ENCODE measurements at regions of chr3 and their contacts with region 1.

Region 1: DNA sequence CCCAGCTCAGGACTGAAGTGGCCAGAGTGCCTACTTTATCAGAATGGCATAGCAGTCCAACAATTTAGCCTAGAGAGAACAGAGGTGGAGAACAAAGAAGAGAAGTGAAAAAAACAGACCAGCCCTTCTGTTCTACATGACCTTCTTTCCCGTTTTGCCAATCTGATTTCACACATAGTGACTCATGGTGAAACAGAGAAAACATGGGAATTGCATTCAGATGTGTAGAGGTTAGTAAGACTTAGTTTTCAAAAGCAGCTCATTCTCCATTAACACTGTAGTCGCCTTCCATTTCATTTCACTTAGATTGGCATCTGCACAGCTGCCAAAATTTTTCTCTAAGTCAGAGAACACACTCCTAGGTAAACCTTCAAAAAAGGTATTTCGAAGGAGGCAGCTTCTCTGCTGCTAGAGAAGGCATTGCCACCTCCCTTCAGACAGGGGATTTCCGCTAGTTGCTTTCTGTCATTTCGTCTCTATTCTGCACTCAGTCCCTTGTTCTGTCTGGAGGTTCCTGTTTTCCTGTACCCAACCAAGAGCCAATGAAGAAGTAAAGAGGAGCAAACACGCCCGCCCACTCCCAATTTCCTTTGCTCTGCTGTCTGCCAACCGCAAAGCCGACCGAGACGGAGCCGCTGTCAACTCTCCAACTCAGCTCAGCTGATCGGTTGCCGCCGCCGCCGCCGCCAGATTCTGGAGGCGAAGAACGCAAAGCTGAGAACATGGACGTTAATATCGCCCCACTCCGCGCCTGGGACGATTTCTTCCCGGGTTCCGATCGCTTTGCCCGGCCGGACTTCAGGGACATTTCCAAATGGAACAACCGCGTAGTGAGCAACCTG is at the start of gene ARL6IP5:
- DNase-seq: peak; percentile 97
- ATAC-seq: peak; percentile 48
- H3K4me3 Mint-ChIP-seq: peak within 1 kb of the TSS; percentile 90
- H3K27ac Mint-ChIP-seq: peak within 1 kb of the TSS; percentile 97
- H3K4me1 Mint-ChIP-seq: peaks cover 59% of the 10 kb centered on the region
- H3K27me3 Mint-ChIP-seq: no peaks in the 10 kb centered on the region
- total RNA-seq, gene ARL6IP5: 60.4 to 76.0 TPM

Region 2: GRCh38 chr3:68787106-68787626 is 297.4 kb before region 1 on chr3:
- CTCF ChIA-PET with region 1: no interaction called
- POLR2A ChIA-PET with region 1: no interaction called
- intact Hi-C with region 1: no loop called
- DNase-seq: no peak
- ATAC-seq: no peak
- H3K4me3 Mint-ChIP-seq: no peak overlapping the region
- H3K27ac Mint-ChIP-seq: no peak overlapping the region
- H3K4me1 Mint-ChIP-seq: no peaks in the 10 kb centered on the region
- H3K27me3 Mint-ChIP-seq: peaks cover 2% of the 10 kb centered on the region

Region 3: GRCh38 chr3:69013253-69014021 is 71.1 kb before region 1 on chr3 and contains the start of gene EOGT:
- CTCF ChIA-PET with region 1: no interaction called
- POLR2A ChIA-PET with region 1: no interaction called
- intact Hi-C with region 1: loop called (anchors 2 kb)
- DNase-seq: peak; percentile 88
- ATAC-seq: peak; percentile 85
- H3K4me3 Mint-ChIP-seq: peak within 1 kb of the TSS; percentile 77
- H3K27ac Mint-ChIP-seq: peak within 1 kb of the TSS; percentile 82
- H3K4me1 Mint-ChIP-seq: peaks cover 24% of the 10 kb centered on the region
- H3K27me3 Mint-ChIP-seq: no peaks in the 10 kb centered on the region
- total RNA-seq, gene EOGT: 6.0 to 8.4 TPM

Region 4: GRCh38 chr3:69033470-69033869 is 51.1 kb before region 1 on chr3:
- CTCF ChIA-PET with region 1: interaction called, 4 read pairs
- POLR2A ChIA-PET with region 1: no interaction called
- intact Hi-C with region 1: loop called in 1 of 2 experiments (anchors 1 kb)
- DNase-seq: peak; percentile 28
- ATAC-seq: peak; percentile 80
- H3K4me3 Mint-ChIP-seq: no peak overlapping the region
- H3K27ac Mint-ChIP-seq: no peak overlapping the region
- H3K4me1 Mint-ChIP-seq: peaks cover 15% of the 10 kb centered on the region
- H3K27me3 Mint-ChIP-seq: no peaks in the 10 kb centered on the region

Measured in activated CD4-positive, alpha-beta T cell treated with anti-CD3 and anti-CD28 coated beads for 36 hours (primary cell).